Stomach (tissue), 19 donors: ENCODE measurements at regions of chr2 and their contacts with region 1.

Region 1: GRCh38 chr2:191155608-191156071 is 4.8 kb upstream of the STAT4 start:
- DNase-seq: peak in 1 of 2 donors; percentile 56
- H3K4me3 ChIP-seq: no peak overlapping the region
- H3K27ac ChIP-seq: no peak overlapping the region
- H3K4me1 ChIP-seq: peaks cover 0 to 10% (median 9%) of the 10 kb centered on the region in 4 donors
- H3K27me3 ChIP-seq: no peaks in the 10 kb centered on the region
- CTCF ChIP-seq: peak in 5 of 7 experiments; percentile 21 to 59 (median 38)
- EP300 ChIP-seq: no peak
- POLR2A ChIP-seq: no peak

Region 2: GRCh38 chr2:191051825-191052778 is 103.5 kb before region 1 on chr2:
- intact Hi-C with region 1: loop called (anchors 5 kb)
- DNase-seq: peak in 1 of 2 donors; percentile 72
- H3K4me3 ChIP-seq: no peak overlapping the region
- H3K27ac ChIP-seq: no peak overlapping the region
- H3K4me1 ChIP-seq: peaks cover 0 to 25% (median 2%) of the 10 kb centered on the region in 4 donors
- H3K27me3 ChIP-seq: peaks cover 0 to 6% (median 0%) of the 10 kb centered on the region in 3 donors
- CTCF ChIP-seq: peak in 5 of 7 experiments; percentile 23 to 72 (median 57)
- EP300 ChIP-seq: no peak
- POLR2A ChIP-seq: no peak

Region 3: GRCh38 chr2:191432121-191432520 is 276.5 kb after region 1 on chr2:
- intact Hi-C with region 1: no loop called
- DNase-seq: no peak
- H3K4me3 ChIP-seq: no peak overlapping the region
- H3K27ac ChIP-seq: no peak overlapping the region
- H3K4me1 ChIP-seq: no peaks in the 10 kb centered on the region
- H3K27me3 ChIP-seq: no peaks in the 10 kb centered on the region
- CTCF ChIP-seq: no peak
- EP300 ChIP-seq: no peak
- POLR2A ChIP-seq: no peak

Region 4: GRCh38 chr2:191521608-191522208 is 366.1 kb after region 1 on chr2:
- intact Hi-C with region 1: no loop called
- DNase-seq: peak in 1 of 2 donors; percentile 52
- H3K4me3 ChIP-seq: no peak overlapping the region
- H3K27ac ChIP-seq: no peak overlapping the region
- H3K4me1 ChIP-seq: peaks cover 0 to 3% (median 0%) of the 10 kb centered on the region in 4 donors
- H3K27me3 ChIP-seq: no peaks in the 10 kb centered on the region
- CTCF ChIP-seq: peak in 5 of 7 experiments; percentile 44 to 81 (median 76)
- EP300 ChIP-seq: no peak
- POLR2A ChIP-seq: no peak